Dorsolateral prefrontal cortex (tissue), 120 donors: ENCODE measurements at regions of chr5 and their contacts with region 1.

Region 1: GRCh38 chr5:157484768-157485167 is 24.8 kb downstream of the NIPAL4 start:
- DNase-seq: peak in 3 of 10 donors; percentile 21 to 55 (median 26)
- H3K4me3 ChIP-seq: no peak overlapping the region
- H3K27ac ChIP-seq: peak overlapping the region in 38 of 59 donors; percentile 2 to 80 (median 50)
- H3K27me3 ChIP-seq: no peaks in the 10 kb centered on the region
- CTCF ChIP-seq: no peak

Region 2: GRCh38 chr5:157431544-157432200 is 53.1 kb before region 1 on chr5:
- intact Hi-C with region 1: loop called in 1 of 2 experiments (anchors 5 kb)
- DNase-seq: peak in 2 of 10 donors; percentile 24 to 32
- H3K4me3 ChIP-seq: peak overlapping the region in 3 of 59 donors; percentile 11 to 40 (median 23)
- H3K27ac ChIP-seq: peak overlapping the region in 29 of 59 donors; percentile 2 to 72 (median 44)
- H3K27me3 ChIP-seq: no peaks in the 10 kb centered on the region
- CTCF ChIP-seq: peak; percentile 46 to 90 (median 72)